ENCODE measurements at regions of chr2 and their contacts with region 1.

Region 1: DNA sequence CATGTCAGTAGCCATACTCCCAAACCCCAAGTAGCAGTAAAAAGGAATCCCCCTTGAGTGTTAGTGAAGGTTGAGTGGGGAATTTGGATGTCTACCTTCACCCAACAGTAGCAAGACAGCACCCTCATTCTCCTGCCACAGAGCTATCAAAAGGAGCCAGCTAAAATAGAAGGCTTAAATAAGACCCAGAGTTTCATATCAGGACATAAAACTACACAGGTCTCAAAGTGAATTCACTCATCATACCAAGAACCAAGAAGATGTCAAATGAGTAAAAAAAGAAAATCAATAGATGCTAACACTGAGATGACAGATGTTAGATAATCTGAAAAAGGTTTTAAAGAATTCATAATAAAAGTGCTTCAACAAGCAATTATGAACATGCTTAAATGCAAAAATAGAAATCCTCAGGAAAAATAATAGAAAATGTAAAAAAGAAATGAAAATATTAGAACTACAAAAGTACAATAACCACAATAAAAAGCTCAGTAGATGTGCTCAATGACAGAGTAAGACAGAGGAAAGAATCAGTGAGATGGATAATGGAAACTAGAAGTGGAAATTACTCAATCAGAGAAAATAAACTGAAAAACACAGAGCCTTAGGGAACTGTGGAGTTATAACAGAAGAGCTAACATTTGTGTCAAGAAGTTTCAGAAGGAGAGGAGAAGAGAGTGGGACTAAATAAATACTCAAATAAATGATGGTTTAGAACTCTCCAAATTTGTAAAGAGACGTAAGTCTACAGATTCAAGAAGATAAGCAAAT is 90.5 kb downstream of the EDAR start:
- DNase-seq: no peak
- H3K4me3 Mint-ChIP-seq: no peak overlapping the region
- H3K27ac Mint-ChIP-seq: peak overlapping the region; percentile 55
- H3K4me1 Mint-ChIP-seq: peaks cover 12% of the 10 kb centered on the region
- H3K27me3 Mint-ChIP-seq: no peaks in the 10 kb centered on the region

Region 2: DNA sequence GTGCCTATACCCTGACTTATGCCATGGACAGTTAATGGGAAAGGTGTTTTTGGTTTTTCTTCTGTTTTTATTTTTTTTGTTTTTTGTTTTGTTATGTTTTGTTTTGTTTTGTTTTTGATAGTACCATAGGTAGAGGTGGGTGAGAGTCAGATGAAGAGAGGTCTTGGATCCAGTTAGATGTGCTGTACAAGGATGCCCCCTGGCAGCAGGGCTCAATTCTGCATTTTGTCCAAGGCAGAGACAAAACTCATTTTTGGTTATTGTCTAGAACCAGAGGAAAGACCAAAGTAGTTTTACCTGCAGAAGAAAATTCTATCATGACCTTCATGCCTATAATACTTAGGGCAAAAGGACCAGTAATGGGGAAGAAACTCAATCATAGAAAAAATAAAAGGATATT is 863.6 kb before region 1 on chr2:
- intact Hi-C with region 1: no loop called
- DNase-seq: no peak
- H3K4me3 Mint-ChIP-seq: no peak overlapping the region
- H3K27ac Mint-ChIP-seq: no peak overlapping the region
- H3K4me1 Mint-ChIP-seq: no peaks in the 10 kb centered on the region
- H3K27me3 Mint-ChIP-seq: no peaks in the 10 kb centered on the region

Region 3: GRCh38 chr2:108835040-108835439 is 63.5 kb before region 1 on chr2:
- intact Hi-C with region 1: loop called (anchors 1 kb)
- DNase-seq: no peak
- H3K4me3 Mint-ChIP-seq: no peak overlapping the region
- H3K27ac Mint-ChIP-seq: peak overlapping the region; percentile 31
- H3K4me1 Mint-ChIP-seq: peaks cover 22% of the 10 kb centered on the region
- H3K27me3 Mint-ChIP-seq: no peaks in the 10 kb centered on the region

Region 4: DNA sequence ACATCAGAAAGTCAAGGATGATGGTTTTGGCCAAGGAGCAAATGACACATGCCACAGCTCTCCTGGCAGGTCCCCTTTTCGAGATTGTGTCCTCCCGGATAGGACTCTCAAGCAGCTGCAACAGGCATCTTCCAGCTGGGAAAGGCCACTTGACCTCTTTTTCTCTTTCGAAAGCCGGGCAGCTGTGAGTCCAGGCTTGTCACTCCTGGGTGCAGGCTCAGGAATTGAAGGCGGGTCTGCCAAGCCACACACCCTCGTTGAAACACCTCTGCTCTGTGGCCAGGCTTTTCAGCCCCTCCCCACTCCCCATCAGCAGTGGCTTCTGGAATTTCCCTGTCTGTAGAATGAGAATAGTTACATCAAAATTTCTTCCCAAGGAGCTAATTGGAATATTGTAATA is 13.9 kb before region 1 on chr2:
- intact Hi-C with region 1: no loop called
- DNase-seq: no peak
- H3K4me3 Mint-ChIP-seq: no peak overlapping the region
- H3K27ac Mint-ChIP-seq: no peak overlapping the region
- H3K4me1 Mint-ChIP-seq: no peaks in the 10 kb centered on the region
- H3K27me3 Mint-ChIP-seq: peaks cover 5% of the 10 kb centered on the region

Region 5: DNA sequence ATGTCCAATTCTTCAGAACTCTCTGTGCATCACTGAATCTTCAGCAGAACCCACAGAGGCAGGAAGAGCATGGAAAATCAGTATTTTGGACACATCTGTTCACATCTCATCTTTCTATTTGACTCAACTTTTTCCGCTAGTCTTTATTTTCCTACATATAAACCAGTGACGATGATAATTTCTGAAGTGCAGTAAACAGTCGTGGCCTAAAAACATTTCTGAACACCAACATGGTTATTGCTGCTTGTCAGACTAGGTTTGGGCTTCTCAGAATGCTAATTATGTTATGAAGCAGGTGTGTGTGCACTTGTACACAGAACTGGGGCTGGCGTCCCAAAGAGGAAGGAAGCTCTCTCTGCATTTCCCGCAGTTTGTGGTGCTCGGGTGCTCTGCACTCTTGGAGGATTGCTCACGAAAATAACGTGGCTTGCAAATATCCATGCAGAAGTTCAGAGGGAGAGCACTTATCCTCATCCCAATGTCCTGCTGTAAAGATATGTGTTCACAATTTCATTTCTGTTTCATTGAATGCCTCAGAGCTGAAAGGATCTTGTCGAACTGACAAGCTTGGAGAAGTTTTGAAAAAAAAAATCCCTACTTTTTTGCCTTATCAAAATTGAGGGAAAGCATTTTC is 39.7 kb after region 1 on chr2:
- intact Hi-C with region 1: loop called (anchors 1 kb)
- DNase-seq: no peak
- H3K4me3 Mint-ChIP-seq: no peak overlapping the region
- H3K27ac Mint-ChIP-seq: peak overlapping the region; percentile 74
- H3K4me1 Mint-ChIP-seq: peaks cover 23% of the 10 kb centered on the region
- H3K27me3 Mint-ChIP-seq: peaks cover 2% of the 10 kb centered on the region

Region 6: GRCh38 chr2:108945969-108946368 is 47.5 kb after region 1 on chr2:
- intact Hi-C with region 1: loop called (anchors 1 kb)
- DNase-seq: no peak
- H3K4me3 Mint-ChIP-seq: no peak overlapping the region
- H3K27ac Mint-ChIP-seq: no peak overlapping the region
- H3K4me1 Mint-ChIP-seq: no peaks in the 10 kb centered on the region
- H3K27me3 Mint-ChIP-seq: no peaks in the 10 kb centered on the region